Activated naive CD4-positive, alpha-beta T cell treated with anti-CD3 and anti-CD28 coated beads for 36 hours (primary cell): ENCODE measurements at regions of chr10 and their contacts with region 1.

Region 1: DNA sequence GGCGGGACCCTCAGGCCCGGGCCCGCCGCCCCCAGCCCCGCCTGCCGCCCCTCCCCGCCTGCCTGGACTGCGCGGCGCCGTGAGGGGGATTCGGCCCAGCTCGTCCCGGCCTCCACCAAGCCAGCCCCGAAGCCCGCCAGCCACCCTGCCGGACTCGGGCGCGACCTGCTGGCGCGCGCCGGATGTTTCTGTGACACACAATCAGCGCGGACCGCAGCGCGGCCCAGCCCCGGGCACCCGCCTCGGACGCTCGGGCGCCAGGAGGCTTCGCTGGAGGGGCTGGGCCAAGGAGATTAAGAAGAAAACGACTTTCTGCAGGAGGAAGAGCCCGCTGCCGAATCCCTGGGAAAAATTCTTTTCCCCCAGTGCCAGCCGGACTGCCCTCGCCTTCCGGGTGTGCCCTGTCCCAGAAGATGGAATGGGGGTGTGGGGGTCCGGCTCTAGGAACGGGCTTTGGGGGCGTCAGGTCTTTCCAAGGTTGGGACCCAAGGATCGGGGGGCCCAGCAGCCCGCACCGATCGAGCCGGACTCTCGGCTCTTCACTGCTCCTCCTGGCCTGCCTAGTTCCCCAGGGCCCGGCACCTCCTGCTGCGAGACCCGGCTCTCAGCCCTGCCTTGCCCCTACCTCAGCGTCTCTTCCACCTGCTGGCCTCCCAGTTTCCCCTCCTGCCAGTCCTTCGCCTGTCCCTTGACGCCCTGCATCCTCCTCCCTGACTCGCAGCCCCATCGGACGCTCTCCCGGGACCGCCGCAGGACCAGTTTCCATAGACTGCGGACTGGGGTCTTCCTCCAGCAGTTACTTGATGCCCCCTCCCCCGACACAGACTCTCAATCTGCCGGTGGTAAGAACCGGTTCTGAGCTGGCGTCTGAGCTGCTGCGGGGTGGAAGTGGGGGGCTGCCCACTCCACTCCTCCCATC is 82.7 kb downstream of the PAX2 start:
- DNase-seq: peak; percentile 50
- H3K4me3 Mint-ChIP-seq: peak overlapping the region; percentile 66
- H3K27ac Mint-ChIP-seq: no peak overlapping the region
- H3K4me1 Mint-ChIP-seq: peaks cover 19% of the 10 kb centered on the region
- H3K27me3 Mint-ChIP-seq: peaks cover 74% of the 10 kb centered on the region

Region 2: DNA sequence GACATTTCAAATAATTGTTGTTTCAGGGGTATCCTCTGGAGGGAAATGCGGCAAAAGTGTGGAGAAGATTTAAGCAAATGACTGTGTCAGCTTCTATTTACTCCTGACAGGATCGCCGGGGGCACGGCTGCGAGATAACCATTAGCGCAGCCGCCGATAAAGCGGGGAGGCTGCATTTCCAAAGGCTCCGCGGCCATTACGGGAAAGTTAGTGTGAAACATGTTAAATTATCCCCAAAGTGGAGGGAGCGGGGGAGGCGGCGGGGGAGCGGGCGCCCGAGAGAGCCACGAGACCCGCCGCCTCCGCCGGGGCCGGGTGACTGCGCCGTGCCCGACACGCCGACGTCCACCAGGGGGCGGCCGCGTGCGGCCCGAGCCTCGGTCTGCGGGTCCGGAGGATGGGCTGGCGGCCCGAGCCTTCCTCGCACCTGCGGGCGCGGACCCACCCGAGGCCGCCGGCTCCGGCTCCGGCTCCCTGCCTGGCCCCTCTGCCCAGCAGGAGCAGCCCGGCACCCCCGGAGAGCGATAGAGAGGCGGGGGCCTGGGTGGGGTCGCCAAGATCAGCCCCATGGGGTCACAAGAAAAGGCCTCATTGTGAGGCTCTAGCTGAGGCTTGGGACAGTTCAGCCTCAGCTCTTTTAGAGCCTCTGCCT is 157.1 kb before region 1 on chr10:
- CTCF ChIA-PET with region 1: no interaction called
- intact Hi-C with region 1: loop called (anchors 5 kb)
- DNase-seq: peak; percentile 67
- H3K4me3 Mint-ChIP-seq: no peak overlapping the region
- H3K27ac Mint-ChIP-seq: no peak overlapping the region
- H3K4me1 Mint-ChIP-seq: peaks cover 6% of the 10 kb centered on the region
- H3K27me3 Mint-ChIP-seq: peaks cover 58% of the 10 kb centered on the region

Region 3: GRCh38 chr10:100848770-100849169 is 20.7 kb after region 1 on chr10:
- CTCF ChIA-PET with region 1: no interaction called
- intact Hi-C with region 1: no loop called
- DNase-seq: no peak
- H3K4me3 Mint-ChIP-seq: no peak overlapping the region
- H3K27ac Mint-ChIP-seq: no peak overlapping the region
- H3K4me1 Mint-ChIP-seq: peaks cover 12% of the 10 kb centered on the region
- H3K27me3 Mint-ChIP-seq: peaks cover 43% of the 10 kb centered on the region

Region 4: DNA sequence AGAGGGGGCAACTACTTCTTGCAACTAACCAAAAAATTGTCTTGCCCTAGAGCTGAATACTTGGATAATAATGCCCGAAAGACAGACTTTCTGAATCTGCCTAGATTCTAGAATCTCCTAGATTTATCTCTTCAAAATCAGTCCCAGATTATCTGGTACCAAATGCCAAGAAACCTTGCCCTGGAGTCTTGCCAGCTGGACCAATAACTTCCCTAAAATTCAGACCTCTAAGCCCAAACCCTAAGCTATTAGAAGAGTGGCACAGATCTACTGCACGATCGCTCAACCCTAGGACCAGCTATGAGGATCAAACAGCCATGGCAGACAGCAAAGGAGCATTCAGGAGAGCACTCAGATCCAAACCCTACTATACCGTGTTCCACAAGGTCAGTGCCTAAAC is 1182.9 kb after region 1 on chr10:
- CTCF ChIA-PET with region 1: no interaction called
- intact Hi-C with region 1: no loop called
- DNase-seq: no peak
- H3K4me3 Mint-ChIP-seq: no peak overlapping the region
- H3K27ac Mint-ChIP-seq: no peak overlapping the region
- H3K4me1 Mint-ChIP-seq: no peaks in the 10 kb centered on the region
- H3K27me3 Mint-ChIP-seq: no peaks in the 10 kb centered on the region